Activated T-helper 2 cell treated with anti-CD3 and anti-CD28 coated beads, Interferon-gamma antibody, Interleukin-2, Interleukin-4, amounts not matched to agents 10 μg/mL and 5 μg/mL and 100 μg/mL, durations not matched to agents 14 hours and 24 hours and 36 hours (primary cell): ENCODE measurements at regions of chr3 and their contacts with region 1.

Region 1: DNA sequence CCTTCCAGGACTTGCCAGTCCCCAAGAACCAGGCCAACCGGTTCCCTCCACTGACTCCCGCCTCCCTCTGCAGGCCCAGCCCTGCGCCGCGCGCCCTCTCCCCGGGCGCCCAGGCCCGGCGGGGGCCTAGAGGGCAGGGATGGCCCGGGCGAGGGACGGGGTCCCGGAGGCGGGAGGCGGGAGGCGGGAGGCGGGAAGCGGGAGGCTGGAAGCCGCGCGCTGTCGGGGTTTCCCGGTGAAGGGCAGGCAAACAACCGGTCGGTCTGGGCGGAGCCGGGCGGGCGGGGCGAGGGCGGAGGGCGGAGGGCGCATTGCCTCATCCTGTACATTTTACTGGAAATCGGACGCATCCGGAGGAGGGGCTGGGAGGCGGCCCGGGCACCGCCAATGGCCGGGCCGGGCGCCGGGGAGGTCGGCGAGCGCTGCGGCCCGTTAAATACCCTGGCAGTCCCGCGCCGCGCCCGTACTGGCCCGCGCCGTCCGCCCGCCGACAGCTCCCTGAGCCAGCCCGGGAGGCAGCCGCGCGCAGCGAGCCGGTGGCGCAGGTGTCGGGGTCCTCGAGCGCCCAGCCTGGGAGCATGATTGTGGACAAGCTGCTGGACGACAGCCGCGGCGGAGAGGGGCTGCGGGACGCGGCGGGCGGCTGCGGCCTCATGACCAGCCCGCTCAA is at the start of gene NFKBIZ:
- DNase-seq: peak; percentile 90
- H3K4me3 Mint-ChIP-seq: peak within 1 kb of the TSS; percentile 94
- H3K27ac Mint-ChIP-seq: peak within 1 kb of the TSS; percentile 97
- H3K4me1 Mint-ChIP-seq: peaks cover 44% of the 10 kb centered on the region
- H3K27me3 Mint-ChIP-seq: no peaks in the 10 kb centered on the region
- total RNA-seq, gene NFKBIZ: 122 and 140 TPM in 2 replicates

Region 2: DNA sequence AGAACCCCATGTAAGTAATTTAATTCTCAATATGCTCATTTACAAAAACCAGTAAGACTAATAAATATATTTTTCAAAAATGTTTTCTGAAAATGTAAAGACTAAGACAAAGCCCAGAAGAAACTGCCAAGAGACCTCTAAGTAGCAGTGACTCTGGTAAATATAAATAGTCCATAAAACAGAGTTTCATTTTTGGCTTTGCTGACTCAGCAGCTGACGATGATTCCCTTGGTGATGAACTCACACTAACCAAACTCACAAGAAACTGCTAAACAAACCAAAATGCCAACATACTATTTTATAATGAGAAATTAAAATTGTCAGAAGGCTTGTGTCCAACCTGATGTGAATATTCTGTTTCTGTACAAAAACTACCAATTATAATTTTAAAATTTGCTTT is 497.4 kb before region 1 on chr3:
- intact Hi-C with region 1: no loop called
- DNase-seq: no peak
- H3K4me3 Mint-ChIP-seq: no peak overlapping the region
- H3K27ac Mint-ChIP-seq: no peak overlapping the region
- H3K4me1 Mint-ChIP-seq: no peaks in the 10 kb centered on the region
- H3K27me3 Mint-ChIP-seq: no peaks in the 10 kb centered on the region

Region 3: DNA sequence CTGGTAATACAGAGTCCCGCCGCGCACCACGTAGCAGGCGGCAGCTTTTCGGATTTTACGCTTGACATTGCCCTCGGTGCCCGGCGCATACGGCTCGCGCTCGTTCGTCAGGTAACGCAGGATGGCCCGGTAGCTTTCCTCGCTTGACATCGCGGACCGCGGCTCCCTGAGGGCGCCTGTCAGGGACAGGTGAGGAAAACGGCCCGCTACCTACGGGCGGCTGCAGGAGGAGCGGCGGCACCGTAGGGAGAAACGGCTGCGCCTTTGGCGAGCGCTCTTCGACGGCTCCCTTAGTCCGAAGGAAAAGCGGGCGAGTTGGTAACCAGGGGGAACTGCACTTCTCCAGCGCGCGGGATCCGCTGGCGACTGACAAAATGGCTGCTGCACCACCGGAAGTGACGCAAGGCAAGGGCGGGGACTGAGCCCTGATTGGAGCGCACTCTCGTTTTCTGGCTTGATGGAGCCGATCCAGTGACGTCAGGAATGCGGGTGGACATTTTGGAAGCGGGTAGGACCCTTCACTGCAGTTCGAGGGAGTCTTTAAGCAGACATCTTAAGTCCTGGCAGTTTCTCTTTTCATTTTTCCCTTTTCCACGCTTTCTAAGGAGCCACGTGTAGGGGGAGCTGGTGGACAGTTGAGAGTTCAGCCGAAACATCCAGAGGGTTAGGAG is 172.3 kb before region 1 on chr3 and contains the start of gene ZBTB11:
- intact Hi-C with region 1: loop called (anchors 2 kb)
- DNase-seq: peak; percentile 99
- H3K4me3 Mint-ChIP-seq: peak within 1 kb of the TSS; percentile 94
- H3K27ac Mint-ChIP-seq: peak within 1 kb of the TSS; percentile 94
- H3K4me1 Mint-ChIP-seq: peaks cover 46% of the 10 kb centered on the region
- H3K27me3 Mint-ChIP-seq: no peaks in the 10 kb centered on the region
- total RNA-seq, gene ZBTB11: 27.5 and 29.6 TPM in 2 replicates

Region 4: DNA sequence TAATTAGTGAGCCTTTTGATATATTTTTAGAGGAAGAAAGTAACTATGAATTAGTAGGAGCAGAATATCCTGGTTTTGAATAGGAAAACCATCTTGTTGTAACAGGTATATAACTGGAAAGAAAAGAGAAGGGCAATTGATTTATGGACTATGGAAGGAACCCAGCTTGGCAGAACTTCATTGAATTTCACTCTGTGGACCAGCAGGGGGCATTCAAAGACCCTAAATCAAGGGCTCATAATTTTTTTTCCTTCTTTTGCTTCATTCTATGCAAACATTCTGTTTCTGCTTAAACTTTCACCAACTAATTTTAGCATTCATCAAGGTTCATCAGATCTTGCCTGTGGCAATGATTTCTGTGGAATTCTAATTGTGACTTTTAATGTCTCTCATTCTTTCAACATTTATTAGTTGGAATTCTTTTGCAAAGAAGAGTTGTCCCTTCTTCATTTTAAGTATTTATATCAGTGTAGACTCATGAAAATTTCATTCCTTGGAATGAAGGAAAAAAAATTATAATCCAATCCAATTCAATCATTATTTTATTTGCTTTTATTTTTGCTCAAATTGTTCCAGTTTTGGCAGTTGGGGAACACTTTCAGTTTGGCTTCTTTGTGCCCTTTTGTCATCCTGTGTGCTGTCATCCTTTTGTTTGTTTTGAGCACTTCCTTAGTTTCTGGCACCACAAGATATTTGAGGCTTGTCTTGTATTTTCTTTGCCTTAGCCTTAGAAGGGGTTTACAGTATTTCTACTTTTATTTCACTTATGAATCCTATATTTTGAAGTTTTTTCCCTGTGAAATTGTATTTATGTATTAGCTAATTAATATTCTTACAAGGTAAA is 39.8 kb before region 1 on chr3:
- intact Hi-C with region 1: loop called (anchors 1 kb)
- DNase-seq: no peak
- H3K4me3 Mint-ChIP-seq: no peak overlapping the region
- H3K27ac Mint-ChIP-seq: peak overlapping the region; percentile 48
- H3K4me1 Mint-ChIP-seq: peaks cover 51% of the 10 kb centered on the region
- H3K27me3 Mint-ChIP-seq: no peaks in the 10 kb centered on the region

Region 5: GRCh38 chr3:101836652-101837598 is 12.3 kb before region 1 on chr3:
- intact Hi-C with region 1: loop called (anchors 1 kb)
- DNase-seq: no peak
- H3K4me3 Mint-ChIP-seq: no peak overlapping the region
- H3K27ac Mint-ChIP-seq: no peak overlapping the region
- H3K4me1 Mint-ChIP-seq: peaks cover 58% of the 10 kb centered on the region
- H3K27me3 Mint-ChIP-seq: no peaks in the 10 kb centered on the region

Region 6: GRCh38 chr3:101936419-101937356 is 87.5 kb after region 1 on chr3:
- intact Hi-C with region 1: loop called (anchors 1 kb)
- DNase-seq: peak; percentile 18
- H3K4me3 Mint-ChIP-seq: peak overlapping the region; percentile 46
- H3K27ac Mint-ChIP-seq: peak overlapping the region; percentile 71
- H3K4me1 Mint-ChIP-seq: peaks cover 33% of the 10 kb centered on the region
- H3K27me3 Mint-ChIP-seq: peaks cover 16% of the 10 kb centered on the region

Region 7: GRCh38 chr3:101976473-101976872 is 127.3 kb after region 1 on chr3:
- intact Hi-C with region 1: no loop called
- DNase-seq: no peak
- H3K4me3 Mint-ChIP-seq: no peak overlapping the region
- H3K27ac Mint-ChIP-seq: no peak overlapping the region
- H3K4me1 Mint-ChIP-seq: peaks cover 17% of the 10 kb centered on the region
- H3K27me3 Mint-ChIP-seq: peaks cover 15% of the 10 kb centered on the region

Region 8: DNA sequence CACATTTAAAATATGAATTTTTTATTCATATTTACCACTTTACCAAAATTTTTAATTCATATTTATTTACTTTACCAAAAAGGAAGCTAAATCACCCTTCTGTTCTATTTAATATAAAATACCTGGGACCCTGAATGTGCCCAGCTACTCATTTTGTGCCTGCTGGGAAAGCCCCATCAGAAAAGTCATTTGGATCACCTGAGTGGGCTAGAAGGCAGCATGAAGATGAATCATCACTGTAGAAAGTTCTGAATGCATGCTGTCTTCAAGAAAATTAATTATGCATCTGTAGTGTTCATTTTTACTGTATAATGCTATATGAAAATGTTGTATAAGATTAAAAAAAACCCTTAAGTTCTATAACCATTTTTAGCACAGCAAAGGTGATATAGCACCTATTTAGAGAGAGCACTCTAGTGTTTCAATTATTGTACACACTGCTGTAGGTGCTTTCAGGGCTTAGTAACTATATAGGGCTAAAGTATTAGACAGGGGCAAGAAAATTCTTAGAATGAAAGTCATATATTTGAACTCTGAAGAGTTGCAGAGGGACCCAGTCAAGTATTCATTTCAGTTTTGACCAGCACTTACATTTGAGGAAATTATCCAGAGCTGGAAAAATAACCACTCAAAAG is 175.2 kb after region 1 on chr3:
- intact Hi-C with region 1: loop called (anchors 1 kb)
- DNase-seq: no peak
- H3K4me3 Mint-ChIP-seq: no peak overlapping the region
- H3K27ac Mint-ChIP-seq: no peak overlapping the region
- H3K4me1 Mint-ChIP-seq: peaks cover 18% of the 10 kb centered on the region
- H3K27me3 Mint-ChIP-seq: peaks cover 6% of the 10 kb centered on the region

Region 9: GRCh38 chr3:102229062-102229655 is 380.0 kb after region 1 on chr3:
- intact Hi-C with region 1: loop called (anchors 2 kb)
- DNase-seq: peak; percentile 62
- H3K4me3 Mint-ChIP-seq: no peak overlapping the region
- H3K27ac Mint-ChIP-seq: no peak overlapping the region
- H3K4me1 Mint-ChIP-seq: peaks cover 23% of the 10 kb centered on the region
- H3K27me3 Mint-ChIP-seq: peaks cover 23% of the 10 kb centered on the region